ENCODE measurements at regions of chr2 and their contacts with region 1.

Region 1: GRCh38 chr2:42828487-42829425 is 36.4 kb upstream of the HAAO start:
- DNase-seq: peak; percentile 78 to 89 (median 85)
- H3K4me3 ChIP-seq: no peak overlapping the region
- H3K27ac ChIP-seq: peak overlapping the region in 1 of 2 donors; percentile 7
- H3K4me1 ChIP-seq: peaks cover 14% of the 10 kb centered on the region
- H3K27me3 ChIP-seq: no peaks in the 10 kb centered on the region
- CTCF ChIP-seq: peak; percentile 76 to 98 (median 96)
- EP300 ChIP-seq: no peak
- POLR2A ChIP-seq: peak; percentile 17

Region 2: GRCh38 chr2:41326851-41327250 is 1501.9 kb before region 1 on chr2:
- intact Hi-C with region 1: no loop called
- DNase-seq: no peak
- H3K4me3 ChIP-seq: no peak overlapping the region
- H3K27ac ChIP-seq: no peak overlapping the region
- H3K4me1 ChIP-seq: no peaks in the 10 kb centered on the region
- H3K27me3 ChIP-seq: no peaks in the 10 kb centered on the region
- CTCF ChIP-seq: no peak
- EP300 ChIP-seq: no peak
- POLR2A ChIP-seq: no peak

Region 3: DNA sequence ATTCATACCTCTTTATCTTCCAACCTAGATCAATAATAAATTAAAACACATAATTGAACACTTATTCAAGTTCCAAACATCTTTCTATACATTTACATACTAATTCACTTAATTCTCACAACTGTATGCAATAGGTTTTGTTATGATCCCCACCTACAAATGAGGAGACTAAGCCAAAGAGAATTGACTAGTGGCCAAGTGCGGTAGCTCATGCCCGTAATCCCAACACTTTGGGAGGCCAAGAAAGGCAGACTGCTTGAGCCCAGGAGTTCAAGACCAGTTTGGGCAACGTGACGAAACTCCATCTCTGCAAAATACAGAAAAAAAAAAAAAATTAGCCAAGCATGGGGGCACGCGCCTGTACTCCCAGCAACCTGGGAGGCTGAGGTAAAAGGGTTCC is 371.7 kb before region 1 on chr2:
- intact Hi-C with region 1: no loop called
- DNase-seq: no peak
- H3K4me3 ChIP-seq: no peak overlapping the region
- H3K27ac ChIP-seq: no peak overlapping the region
- H3K4me1 ChIP-seq: no peaks in the 10 kb centered on the region
- H3K27me3 ChIP-seq: no peaks in the 10 kb centered on the region
- CTCF ChIP-seq: no peak
- EP300 ChIP-seq: no peak
- POLR2A ChIP-seq: no peak

Region 4: DNA sequence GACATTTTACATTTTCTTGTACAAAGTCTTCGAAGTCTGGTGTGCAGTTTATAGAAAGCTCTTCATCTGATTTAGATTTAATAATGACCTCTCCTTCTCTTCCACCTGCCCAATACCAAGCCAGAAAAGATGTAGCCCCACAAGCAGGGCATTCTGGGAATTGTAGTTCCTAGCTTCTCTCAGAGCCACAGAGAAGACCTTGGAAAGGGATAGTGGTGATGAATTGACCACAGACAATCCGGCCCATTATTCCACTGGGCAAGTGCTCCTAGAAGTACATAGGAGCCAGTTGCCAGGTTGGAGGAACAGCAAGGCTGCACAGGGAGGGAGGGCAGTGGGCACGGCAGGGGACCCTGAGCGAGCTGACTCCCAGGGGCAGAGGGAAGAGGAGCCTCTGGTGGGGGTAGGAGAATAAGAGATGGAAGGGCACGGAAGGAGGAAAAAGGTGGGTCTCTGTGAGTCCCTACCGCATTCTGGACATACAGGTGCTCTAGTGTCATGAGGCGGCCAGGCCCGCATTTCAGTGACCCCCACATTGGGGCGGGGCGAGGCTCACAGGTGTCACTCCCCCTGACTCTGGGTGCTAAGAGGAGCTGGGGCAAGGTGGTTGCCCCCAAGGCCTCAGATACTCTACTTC is 116.1 kb after region 1 on chr2:
- intact Hi-C with region 1: loop called in 2 of 4 experiments (anchors 2 to 5 kb)
- DNase-seq: no peak
- H3K4me3 ChIP-seq: no peak overlapping the region
- H3K27ac ChIP-seq: no peak overlapping the region
- H3K4me1 ChIP-seq: peaks cover 18% of the 10 kb centered on the region
- H3K27me3 ChIP-seq: no peaks in the 10 kb centered on the region
- CTCF ChIP-seq: no peak
- EP300 ChIP-seq: no peak
- POLR2A ChIP-seq: no peak

Region 5: DNA sequence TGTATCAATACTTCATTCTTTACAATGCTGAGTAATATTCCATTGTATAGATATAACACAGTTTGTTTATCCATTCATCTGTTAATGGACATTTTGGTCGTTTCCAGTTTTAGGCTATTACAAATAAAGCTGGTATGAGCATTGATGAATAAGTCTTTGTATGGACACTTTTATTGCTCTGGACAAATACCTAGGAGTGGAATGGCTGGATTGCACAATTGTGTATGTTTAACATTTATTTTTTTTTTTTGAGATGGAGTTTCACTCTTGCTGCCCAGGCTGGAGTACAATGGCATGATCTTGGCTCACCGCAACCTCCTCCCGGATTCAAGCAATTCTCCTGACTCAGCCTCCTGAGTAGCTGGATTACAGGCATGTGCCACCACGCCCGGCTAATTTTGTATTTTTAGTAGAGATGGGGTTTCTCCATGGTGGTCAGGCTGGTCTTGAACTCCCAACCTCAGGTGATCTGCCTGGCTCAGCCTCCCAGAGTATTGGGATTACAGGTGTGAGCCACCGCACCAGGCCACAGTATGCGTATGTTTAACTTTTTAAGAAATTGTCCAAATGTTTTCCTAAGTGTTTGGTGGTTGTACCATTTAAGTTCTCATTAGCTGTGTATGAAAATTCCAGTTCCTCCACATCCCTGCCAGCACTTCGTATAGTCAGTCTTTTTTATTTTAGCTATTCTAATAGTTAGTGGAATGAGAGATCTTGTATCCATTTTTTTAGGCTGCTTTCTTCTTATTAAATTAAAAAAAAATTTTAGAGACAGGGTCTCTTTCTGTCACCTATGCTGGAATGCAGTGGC is 158.6 kb after region 1 on chr2:
- intact Hi-C with region 1: no loop called
- DNase-seq: peak in 1 of 5 donors; percentile 6
- H3K4me3 ChIP-seq: no peak overlapping the region
- H3K27ac ChIP-seq: no peak overlapping the region
- H3K4me1 ChIP-seq: no peaks in the 10 kb centered on the region
- H3K27me3 ChIP-seq: no peaks in the 10 kb centered on the region
- CTCF ChIP-seq: no peak
- EP300 ChIP-seq: no peak
- POLR2A ChIP-seq: no peak

Region 6: GRCh38 chr2:43142921-43143438 is 314.2 kb after region 1 on chr2:
- intact Hi-C with region 1: loop called in 1 of 4 experiments (anchors 5 kb)
- DNase-seq: no peak
- H3K4me3 ChIP-seq: no peak overlapping the region
- H3K27ac ChIP-seq: no peak overlapping the region
- H3K4me1 ChIP-seq: peaks cover 10% of the 10 kb centered on the region
- H3K27me3 ChIP-seq: no peaks in the 10 kb centered on the region
- CTCF ChIP-seq: no peak
- EP300 ChIP-seq: no peak
- POLR2A ChIP-seq: no peak

Region 7: GRCh38 chr2:43542285-43542937 is 713.7 kb after region 1 on chr2:
- intact Hi-C with region 1: loop called in 1 of 4 experiments (anchors 5 kb)
- DNase-seq: no peak
- H3K4me3 ChIP-seq: no peak overlapping the region
- H3K27ac ChIP-seq: no peak overlapping the region
- H3K4me1 ChIP-seq: peaks cover 8% of the 10 kb centered on the region
- H3K27me3 ChIP-seq: no peaks in the 10 kb centered on the region
- CTCF ChIP-seq: peak; percentile 33 to 84 (median 70)
- EP300 ChIP-seq: no peak
- POLR2A ChIP-seq: no peak